Endothelial cell of umbilical vein (primary cell): ENCODE measurements at regions of chr7 and their contacts with region 1.

Region 1: GRCh38 chr7:26667500-26668133 is 196.8 kb downstream of the SKAP2 start:
- DNase-seq: peak; percentile 96
- H3K4me3 ChIP-seq: no peak overlapping the region
- H3K27ac ChIP-seq: no peak overlapping the region
- H3K4me1 ChIP-seq: peaks cover 3% of the 10 kb centered on the region
- H3K27me3 ChIP-seq: no peaks in the 10 kb centered on the region
- CTCF ChIP-seq: peak; percentile 80 to 91
- POLR2A ChIP-seq: no peak

Region 2: GRCh38 chr7:25862260-25863037 is 805.2 kb before region 1 on chr7:
- CTCF ChIA-PET with region 1: interaction called, 5 read pairs
- POLR2A ChIA-PET with region 1: no interaction called
- dilution Hi-C with region 1: no loop called
- intact Hi-C with region 1: loop called (anchors 10 kb)
- DNase-seq: peak; percentile 100
- H3K4me3 ChIP-seq: peak overlapping the region in 1 of 3 experiments; percentile 43
- H3K27ac ChIP-seq: no peak overlapping the region
- H3K4me1 ChIP-seq: peaks cover 6% of the 10 kb centered on the region
- H3K27me3 ChIP-seq: peaks cover 60 to 83% of the 10 kb centered on the region in 2 experiments
- CTCF ChIP-seq: no peak
- POLR2A ChIP-seq: no peak

Region 3: GRCh38 chr7:26078437-26079336 is 588.9 kb before region 1 on chr7:
- CTCF ChIA-PET with region 1: interaction called, 3 read pairs
- POLR2A ChIA-PET with region 1: no interaction called
- dilution Hi-C with region 1: no loop called
- intact Hi-C with region 1: loop called (anchors 5 kb)
- DNase-seq: peak; percentile 45
- H3K4me3 ChIP-seq: no peak overlapping the region
- H3K27ac ChIP-seq: no peak overlapping the region
- H3K4me1 ChIP-seq: no peaks in the 10 kb centered on the region
- H3K27me3 ChIP-seq: peaks cover 27 to 54% of the 10 kb centered on the region in 2 experiments
- CTCF ChIP-seq: peak; percentile 13 to 45
- POLR2A ChIP-seq: no peak

Region 4: DNA sequence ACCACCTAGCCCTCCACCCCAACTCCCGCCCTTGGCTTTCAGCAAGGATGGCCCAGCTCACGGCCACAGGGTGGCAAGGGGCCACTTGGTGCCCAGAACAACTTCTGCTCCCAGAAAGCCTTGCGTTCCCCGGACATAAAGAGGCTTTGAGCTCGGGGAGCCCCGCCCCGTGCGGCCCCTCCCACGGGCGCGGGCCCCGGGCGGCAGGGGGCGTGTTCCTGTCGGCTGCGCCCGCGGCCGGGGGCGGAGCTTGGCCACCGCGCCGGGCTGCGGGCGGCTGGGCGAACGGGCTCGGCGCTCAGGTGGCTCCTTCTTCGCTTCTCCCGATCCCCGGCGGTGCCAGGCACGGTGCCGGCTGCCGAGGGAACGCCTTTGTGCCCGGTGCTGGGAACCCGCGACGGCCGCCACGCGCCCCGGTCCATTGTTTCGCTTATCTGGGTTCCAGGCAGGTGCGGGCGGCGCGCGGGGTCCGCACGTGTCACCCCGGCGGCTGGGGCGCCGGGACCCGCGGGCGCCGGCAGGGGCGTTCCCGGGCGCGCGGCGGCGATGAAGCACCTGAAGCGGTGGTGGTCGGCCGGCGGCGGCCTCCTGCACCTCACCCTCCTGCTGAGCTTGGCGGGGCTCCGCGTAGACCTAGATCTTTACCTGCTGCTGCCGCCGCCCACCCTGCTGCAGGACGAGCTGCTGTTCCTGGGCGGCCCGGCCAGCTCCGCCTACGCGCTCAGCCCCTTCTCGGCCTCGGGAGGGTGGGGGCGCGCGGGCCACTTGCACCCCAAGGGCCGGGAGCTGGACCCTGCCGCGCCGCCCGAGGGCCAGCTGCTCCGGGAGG is 515.5 kb before region 1 on chr7 and contains the start of gene NFE2L3:
- CTCF ChIA-PET with region 1: interaction called, 3 read pairs
- POLR2A ChIA-PET with region 1: no interaction called
- dilution Hi-C with region 1: no loop called
- intact Hi-C with region 1: loop called (anchors 5 kb)
- DNase-seq: peak; percentile 77
- H3K4me3 ChIP-seq: peak within 1 kb of the TSS; percentile 42 to 71 (median 68)
- H3K27ac ChIP-seq: peak within 1 kb of the TSS; percentile 92
- H3K4me1 ChIP-seq: peaks cover 45% of the 10 kb centered on the region
- H3K27me3 ChIP-seq: peaks cover 0 to 4% of the 10 kb centered on the region in 2 experiments
- CTCF ChIP-seq: peak in 1 of 2 donors; percentile 7
- POLR2A ChIP-seq: peak; percentile 46
- total RNA-seq, gene NFE2L3: 28.4 and 40.2 TPM in 2 replicates

Region 5: GRCh38 chr7:26250239-26250638 is 417.4 kb before region 1 on chr7:
- CTCF ChIA-PET with region 1: no interaction called
- POLR2A ChIA-PET with region 1: no interaction called
- dilution Hi-C with region 1: no loop called
- intact Hi-C with region 1: no loop called
- DNase-seq: no peak
- H3K4me3 ChIP-seq: no peak overlapping the region
- H3K27ac ChIP-seq: no peak overlapping the region
- H3K4me1 ChIP-seq: no peaks in the 10 kb centered on the region
- H3K27me3 ChIP-seq: no peaks in the 10 kb centered on the region
- CTCF ChIP-seq: no peak
- POLR2A ChIP-seq: no peak

Region 6: GRCh38 chr7:26376175-26376917 is 291.3 kb before region 1 on chr7:
- CTCF ChIA-PET with region 1: interaction called, 66 read pairs
- POLR2A ChIA-PET with region 1: interaction called, 3 read pairs
- dilution Hi-C with region 1: no loop called
- intact Hi-C with region 1: loop called (anchors 1 kb)
- DNase-seq: peak; percentile 74
- H3K4me3 ChIP-seq: peak overlapping the region; percentile 70 to 91 (median 76)
- H3K27ac ChIP-seq: peak overlapping the region; percentile 80
- H3K4me1 ChIP-seq: peaks cover 36% of the 10 kb centered on the region
- H3K27me3 ChIP-seq: no peaks in the 10 kb centered on the region
- CTCF ChIP-seq: no peak
- POLR2A ChIP-seq: peak; percentile 51

Region 7: DNA sequence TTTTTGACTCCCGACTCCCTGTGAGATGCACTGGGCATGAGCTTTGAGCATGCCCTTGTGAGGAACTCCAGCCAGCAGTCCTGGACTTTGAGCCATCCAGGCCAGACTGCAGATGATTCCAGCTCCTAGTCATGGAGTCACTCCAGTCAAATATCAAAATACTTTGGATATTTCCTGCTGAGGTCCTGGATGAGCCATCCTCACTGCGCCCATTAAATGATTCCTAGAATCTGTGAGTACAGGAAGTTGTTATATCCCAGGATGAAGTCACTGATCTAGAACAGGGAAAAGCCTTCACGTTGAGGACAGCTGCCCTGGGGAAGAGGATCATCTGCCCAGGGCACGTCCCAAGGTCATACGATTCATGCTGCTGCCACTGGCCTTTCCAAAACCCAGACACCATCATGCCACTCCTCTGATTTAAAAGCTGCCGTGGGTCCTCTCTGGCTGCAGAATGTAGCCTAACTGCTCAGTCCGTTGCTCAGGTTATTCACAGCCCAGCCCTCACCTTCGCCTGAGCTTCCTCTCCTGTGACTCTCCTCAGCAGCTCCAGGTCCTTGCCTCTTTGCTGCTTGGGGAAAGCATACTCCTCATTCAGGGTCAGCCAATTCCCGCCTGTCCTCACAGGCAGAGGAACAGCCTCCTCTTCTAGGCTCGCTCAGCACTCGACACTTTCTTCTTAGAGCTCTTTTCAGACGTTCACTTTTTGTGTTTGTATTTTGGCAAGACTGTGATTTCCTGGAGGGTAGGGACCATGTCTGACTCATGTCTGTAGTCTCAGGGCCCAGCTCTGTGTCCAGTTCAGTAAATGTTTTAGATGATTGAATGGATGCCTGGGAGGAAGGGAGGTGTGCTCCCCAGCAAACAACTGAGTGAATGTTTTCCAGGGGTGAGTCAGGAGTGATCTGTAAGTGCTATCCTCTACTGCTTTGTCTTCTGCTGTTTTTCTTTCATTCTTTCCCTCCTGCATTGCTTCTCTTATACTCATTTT is 218.1 kb before region 1 on chr7:
- CTCF ChIA-PET with region 1: interaction called, 8 read pairs
- POLR2A ChIA-PET with region 1: no interaction called
- dilution Hi-C with region 1: no loop called
- intact Hi-C with region 1: loop called (anchors 5 kb)
- DNase-seq: peak; percentile 96
- H3K4me3 ChIP-seq: no peak overlapping the region
- H3K27ac ChIP-seq: peak overlapping the region; percentile 80
- H3K4me1 ChIP-seq: peaks cover 37% of the 10 kb centered on the region
- H3K27me3 ChIP-seq: no peaks in the 10 kb centered on the region
- CTCF ChIP-seq: no peak
- POLR2A ChIP-seq: peak; percentile 54

Region 8: GRCh38 chr7:26653430-26653911 is 14.1 kb before region 1 on chr7:
- CTCF ChIA-PET with region 1: interaction called, 12 read pairs
- POLR2A ChIA-PET with region 1: no interaction called
- dilution Hi-C with region 1: no loop called
- intact Hi-C with region 1: no loop called
- DNase-seq: peak; percentile 89
- H3K4me3 ChIP-seq: no peak overlapping the region
- H3K27ac ChIP-seq: no peak overlapping the region
- H3K4me1 ChIP-seq: peaks cover 10% of the 10 kb centered on the region
- H3K27me3 ChIP-seq: peaks cover 0 to 3% of the 10 kb centered on the region in 2 experiments
- CTCF ChIP-seq: no peak
- POLR2A ChIP-seq: no peak